ENCODE measurements at regions of chr12 and their contacts with region 1.

Region 1: DNA sequence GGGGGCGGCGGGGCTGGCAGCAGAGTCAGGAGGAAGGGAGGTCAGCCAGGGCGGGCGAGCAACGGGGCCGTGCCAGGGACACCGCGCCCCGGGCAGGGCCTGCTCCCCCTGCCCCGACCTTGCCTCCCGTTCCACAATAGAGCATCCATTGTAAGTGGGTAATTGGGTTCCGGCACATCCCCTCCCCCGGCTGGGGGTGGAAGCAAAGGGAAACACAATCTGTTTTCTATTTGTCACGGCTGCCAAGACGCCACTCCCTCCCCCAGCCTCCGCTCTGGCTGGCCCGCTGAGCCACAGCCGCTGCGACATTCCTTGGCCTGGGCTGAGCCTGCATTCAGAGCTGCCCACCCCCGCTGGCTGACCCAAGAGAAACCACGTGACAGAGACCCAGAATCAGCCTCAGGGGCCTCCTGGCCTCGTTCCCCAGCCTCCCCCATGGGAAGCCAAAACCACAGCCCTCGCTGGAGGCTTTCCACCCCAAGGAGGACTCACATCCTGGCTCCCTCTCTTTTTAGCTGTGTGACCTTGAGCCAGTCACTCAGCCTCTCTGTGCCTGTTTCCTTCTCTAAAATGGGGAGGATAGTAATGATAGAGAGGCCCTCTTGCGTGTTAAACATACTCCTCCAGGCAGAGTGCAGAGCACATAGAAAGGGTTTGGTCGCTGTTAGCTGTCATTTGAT is 117.6 kb downstream of the SCARB1 start:
- DNase-seq: peak; percentile 99
- H3K4me3 Mint-ChIP-seq: peak overlapping the region; percentile 14
- H3K27ac Mint-ChIP-seq: peak overlapping the region; percentile 82
- H3K4me1 Mint-ChIP-seq: peaks cover 92% of the 10 kb centered on the region
- H3K27me3 Mint-ChIP-seq: no peaks in the 10 kb centered on the region
- CTCF ChIP-seq: no peak

Region 2: DNA sequence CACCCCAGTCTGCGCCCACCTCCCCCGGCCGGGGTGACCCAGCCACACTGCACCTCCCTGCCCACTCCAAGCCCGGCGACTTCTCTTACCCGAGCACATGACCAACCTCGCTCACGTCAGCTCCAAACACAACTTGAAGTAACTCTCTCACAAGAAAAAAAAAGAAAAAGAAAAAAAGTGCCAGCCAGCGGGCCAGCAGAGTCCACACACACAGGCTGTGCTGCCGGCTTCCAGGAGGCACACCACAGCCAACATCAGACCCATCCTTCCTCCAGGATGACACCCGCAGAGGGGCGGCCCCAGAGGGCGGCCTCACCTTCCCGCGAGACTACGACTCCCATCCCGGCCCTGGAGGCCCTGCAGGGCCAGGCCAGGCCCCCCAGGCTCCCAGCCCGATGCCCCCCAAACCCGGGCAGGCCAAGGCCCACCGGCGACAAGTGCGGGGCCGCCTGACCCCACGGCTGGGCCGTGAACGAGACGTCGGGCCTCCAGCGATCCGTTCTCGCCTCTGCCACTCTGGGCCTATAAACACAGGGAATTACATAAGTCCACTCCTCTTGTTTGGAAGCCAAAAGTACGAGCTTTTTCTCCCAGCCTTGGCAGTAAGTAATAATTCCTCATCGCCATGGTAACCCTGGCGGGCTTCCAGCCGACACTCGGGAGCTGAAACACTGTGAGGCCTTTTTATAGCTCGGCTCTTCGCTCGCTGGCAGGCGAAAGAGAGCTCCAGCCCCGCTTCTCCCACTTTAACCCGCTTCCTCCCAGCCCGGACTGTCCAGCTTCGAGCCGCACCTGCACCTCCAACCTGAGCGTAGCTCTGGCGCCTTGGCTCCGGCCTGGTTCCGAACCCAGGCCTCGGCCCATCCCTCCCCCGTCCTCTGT is 227.7 kb before region 1 on chr12:
- CTCF ChIA-PET with region 1: interaction called, 13 read pairs
- intact Hi-C with region 1: loop called (anchors 5 kb)
- DNase-seq: peak; percentile 96
- H3K4me3 Mint-ChIP-seq: peak overlapping the region; percentile 79
- H3K27ac Mint-ChIP-seq: peak overlapping the region; percentile 95
- H3K4me1 Mint-ChIP-seq: peaks cover 62% of the 10 kb centered on the region
- H3K27me3 Mint-ChIP-seq: no peaks in the 10 kb centered on the region
- CTCF ChIP-seq: no peak

Region 3: DNA sequence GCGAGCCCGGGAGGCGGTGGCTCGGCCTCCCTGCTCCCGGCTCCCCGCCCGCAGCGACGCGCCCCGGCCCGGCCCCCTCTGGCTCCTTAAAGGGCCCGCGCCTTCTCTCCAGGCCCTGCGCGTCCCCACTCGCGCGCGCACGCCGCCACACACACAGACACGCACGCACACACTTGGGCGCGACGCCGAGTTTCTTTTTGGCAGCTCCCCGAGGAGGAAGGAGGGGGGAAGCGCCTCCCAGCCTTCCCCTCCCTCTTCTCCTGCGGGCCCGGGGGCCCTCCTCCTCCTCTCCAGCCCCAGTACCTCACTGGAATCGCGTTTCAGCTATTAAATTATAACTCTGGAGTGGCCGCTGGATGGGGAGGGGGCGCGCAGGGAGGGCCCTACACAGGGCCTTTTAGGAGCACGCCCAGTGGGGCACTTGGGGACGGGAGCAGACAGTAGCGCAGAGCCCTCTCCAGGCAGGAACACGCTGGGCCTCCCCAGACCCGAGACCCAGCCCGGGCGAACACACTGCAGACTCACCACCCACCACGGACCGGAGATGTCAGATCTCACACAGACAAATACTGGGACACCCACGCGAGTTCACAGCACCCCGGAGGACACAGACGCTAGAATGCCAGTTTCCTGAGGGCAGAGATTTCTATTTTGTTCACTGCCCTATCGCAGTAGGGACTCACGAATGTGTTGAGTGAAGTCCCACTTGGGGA is 178.2 kb before region 1 on chr12:
- CTCF ChIA-PET with region 1: no interaction called
- intact Hi-C with region 1: loop called (anchors 5 kb)
- DNase-seq: peak; percentile 88
- H3K4me3 Mint-ChIP-seq: peak overlapping the region; percentile 87
- H3K27ac Mint-ChIP-seq: peak overlapping the region; percentile 56
- H3K4me1 Mint-ChIP-seq: no peaks in the 10 kb centered on the region
- H3K27me3 Mint-ChIP-seq: no peaks in the 10 kb centered on the region
- CTCF ChIP-seq: no peak

Region 4: GRCh38 chr12:124609041-124609995 is 136.7 kb before region 1 on chr12:
- CTCF ChIA-PET with region 1: no interaction called
- intact Hi-C with region 1: loop called (anchors 2 kb)
- DNase-seq: peak; percentile 99
- H3K4me3 Mint-ChIP-seq: peak overlapping the region; percentile 60
- H3K27ac Mint-ChIP-seq: peak overlapping the region; percentile 79
- H3K4me1 Mint-ChIP-seq: peaks cover 75% of the 10 kb centered on the region
- H3K27me3 Mint-ChIP-seq: no peaks in the 10 kb centered on the region
- CTCF ChIP-seq: no peak

Region 5: DNA sequence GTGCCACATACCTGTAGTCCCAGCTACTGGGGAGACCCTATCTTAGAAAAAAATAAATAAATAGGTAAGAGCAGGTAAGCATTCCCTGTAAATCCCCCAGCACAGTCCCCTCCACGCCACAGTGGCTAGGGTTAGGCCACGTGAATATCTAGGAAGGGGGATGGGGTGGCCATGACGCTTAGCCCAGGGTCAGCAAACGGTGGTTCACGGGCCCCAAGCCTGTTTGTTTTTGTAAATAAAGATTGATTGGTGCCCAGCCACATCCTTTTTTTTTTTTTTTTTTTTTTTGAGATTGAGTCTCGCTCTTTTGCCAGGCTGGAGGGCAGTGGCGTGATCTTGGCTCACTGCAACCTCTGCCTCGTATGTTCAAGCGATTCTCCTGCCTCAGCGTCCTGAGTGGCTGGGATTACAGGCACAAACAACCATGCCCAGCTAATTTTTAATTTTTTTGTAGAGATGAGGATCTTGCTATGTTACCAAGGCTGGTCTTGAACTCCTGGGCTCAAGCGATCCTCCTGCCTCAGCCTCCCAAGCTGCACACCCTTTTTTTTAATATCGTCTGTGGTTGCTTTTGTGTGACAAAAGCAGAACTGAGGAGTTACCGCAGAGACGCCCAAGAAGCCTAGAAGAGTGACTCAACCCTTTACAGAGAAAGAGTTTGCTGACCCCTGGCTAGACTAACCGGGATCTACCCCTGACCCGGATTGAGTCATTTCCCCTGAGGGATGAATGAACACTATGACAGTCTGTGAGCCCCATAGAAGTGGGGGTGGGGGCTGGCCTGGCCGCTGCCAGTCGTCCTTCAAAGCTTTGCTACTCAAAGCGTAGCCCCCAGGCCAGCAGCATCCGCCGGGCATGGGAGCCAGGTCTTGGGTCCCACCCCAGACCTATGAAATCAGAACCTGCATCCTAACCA is 64.9 kb before region 1 on chr12:
- CTCF ChIA-PET with region 1: interaction called, 5 read pairs
- intact Hi-C with region 1: loop called (anchors 1 kb)
- DNase-seq: peak; percentile 76
- H3K4me3 Mint-ChIP-seq: no peak overlapping the region
- H3K27ac Mint-ChIP-seq: peak overlapping the region; percentile 31
- H3K4me1 Mint-ChIP-seq: peaks cover 72% of the 10 kb centered on the region
- H3K27me3 Mint-ChIP-seq: no peaks in the 10 kb centered on the region
- CTCF ChIP-seq: no peak

Region 6: DNA sequence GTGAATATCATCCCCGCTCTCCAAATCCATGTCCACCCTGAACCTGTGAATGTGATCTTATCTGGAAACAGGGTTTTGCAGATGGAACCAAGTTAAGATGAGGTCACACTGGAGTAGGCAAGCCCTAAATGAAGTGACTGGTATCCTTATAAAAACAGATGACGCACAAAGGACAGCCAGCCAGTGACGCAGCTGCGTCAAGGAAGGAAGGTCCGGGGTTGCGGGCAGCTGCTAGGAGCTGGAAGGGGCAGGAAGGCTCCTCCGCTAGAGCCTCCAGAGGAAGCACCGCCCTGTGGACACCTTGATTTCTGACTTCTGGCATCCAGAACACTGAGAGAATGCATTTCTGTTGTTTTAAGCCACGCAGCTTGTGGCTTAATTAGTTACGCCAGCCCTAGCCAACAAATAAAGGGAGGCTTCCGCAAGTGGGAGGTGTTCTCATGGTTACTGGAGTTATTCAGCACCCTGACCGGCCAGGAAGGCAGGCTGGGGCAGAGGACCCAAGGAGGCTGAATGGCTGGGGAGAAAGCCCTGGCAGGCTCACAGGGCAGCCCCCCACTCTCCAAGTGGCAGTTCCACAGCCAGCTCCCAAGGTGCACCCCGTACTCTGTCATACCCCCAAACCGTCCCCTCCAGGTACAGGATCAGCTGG is 51.1 kb before region 1 on chr12:
- CTCF ChIA-PET with region 1: no interaction called
- intact Hi-C with region 1: loop called (anchors 5 kb)
- DNase-seq: peak; percentile 36
- H3K4me3 Mint-ChIP-seq: no peak overlapping the region
- H3K27ac Mint-ChIP-seq: no peak overlapping the region
- H3K4me1 Mint-ChIP-seq: peaks cover 44% of the 10 kb centered on the region
- H3K27me3 Mint-ChIP-seq: no peaks in the 10 kb centered on the region
- CTCF ChIP-seq: no peak

Region 7: GRCh38 chr12:124727264-124727721 is 18.7 kb before region 1 on chr12:
- CTCF ChIA-PET with region 1: interaction called, 7 read pairs
- intact Hi-C with region 1: loop called (anchors 2 kb)
- DNase-seq: peak; percentile 98
- H3K4me3 Mint-ChIP-seq: no peak overlapping the region
- H3K27ac Mint-ChIP-seq: peak overlapping the region; percentile 60
- H3K4me1 Mint-ChIP-seq: peaks cover 50% of the 10 kb centered on the region
- H3K27me3 Mint-ChIP-seq: no peaks in the 10 kb centered on the region
- CTCF ChIP-seq: no peak

Measured in Calu3 (cell line).